T-cell (primary cell): ENCODE measurements at regions of chr10 and their contacts with region 1.

Region 1: GRCh38 chr10:106785528-106785927 is 379.0 kb downstream of the SORCS1 start:
- DNase-seq: no peak
- ATAC-seq: no peak
- H3K4me3 ChIP-seq: no peak overlapping the region
- H3K4me3 Mint-ChIP-seq: no peak overlapping the region
- H3K27ac ChIP-seq: no peak overlapping the region
- H3K27ac Mint-ChIP-seq: no peak overlapping the region
- H3K4me1 ChIP-seq: no peaks in the 10 kb centered on the region
- H3K4me1 Mint-ChIP-seq: no peaks in the 10 kb centered on the region
- H3K27me3 ChIP-seq: no peaks in the 10 kb centered on the region
- H3K27me3 Mint-ChIP-seq: no peaks in the 10 kb centered on the region

Region 2: DNA sequence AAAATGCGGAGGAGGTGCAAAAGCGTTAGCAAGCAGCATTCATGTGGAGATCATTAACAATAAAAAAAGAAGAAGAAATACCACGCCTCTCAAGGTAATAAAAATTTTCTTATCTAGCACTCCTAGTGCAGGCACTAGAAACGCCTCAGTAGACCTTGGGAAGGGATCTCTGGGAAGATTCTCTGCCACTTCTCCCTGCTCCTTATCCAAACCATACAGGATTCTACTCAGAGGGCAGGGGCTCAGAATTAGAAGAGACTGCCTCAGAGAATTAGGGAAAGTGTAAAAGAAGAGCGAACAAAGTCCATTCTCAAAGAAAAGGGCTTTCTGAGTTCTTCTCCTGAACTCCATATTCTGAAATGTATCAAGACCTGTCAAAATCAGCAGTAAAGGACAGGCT is 34.4 kb before region 1 on chr10:
- CTCF ChIA-PET with region 1: no interaction called
- POLR2A ChIA-PET with region 1: interaction called in 1 of 2 experiments, 11 read pairs
- DNase-seq: no peak
- ATAC-seq: no peak
- H3K4me3 ChIP-seq: no peak overlapping the region
- H3K4me3 Mint-ChIP-seq: no peak overlapping the region
- H3K27ac ChIP-seq: no peak overlapping the region
- H3K27ac Mint-ChIP-seq: no peak overlapping the region
- H3K4me1 ChIP-seq: no peaks in the 10 kb centered on the region
- H3K4me1 Mint-ChIP-seq: no peaks in the 10 kb centered on the region
- H3K27me3 ChIP-seq: no peaks in the 10 kb centered on the region
- H3K27me3 Mint-ChIP-seq: no peaks in the 10 kb centered on the region

Region 3: GRCh38 chr10:106795619-106796018 is 10.1 kb after region 1 on chr10:
- CTCF ChIA-PET with region 1: no interaction called
- POLR2A ChIA-PET with region 1: no interaction called
- DNase-seq: peak in 1 of 35 experiments; percentile 1
- ATAC-seq: no peak
- H3K4me3 ChIP-seq: no peak overlapping the region
- H3K4me3 Mint-ChIP-seq: no peak overlapping the region
- H3K27ac ChIP-seq: no peak overlapping the region
- H3K27ac Mint-ChIP-seq: no peak overlapping the region
- H3K4me1 ChIP-seq: no peaks in the 10 kb centered on the region
- H3K4me1 Mint-ChIP-seq: no peaks in the 10 kb centered on the region
- H3K27me3 ChIP-seq: no peaks in the 10 kb centered on the region
- H3K27me3 Mint-ChIP-seq: no peaks in the 10 kb centered on the region